Activated CD4-positive, alpha-beta T cell treated with anti-CD3 and anti-CD28 coated beads, Interleukin-2, amount 10 ng/mL, durations not matched to agents 24 days and 14 days (primary cell): ENCODE measurements at regions of chr1 and their contacts with region 1.

Region 1: GRCh38 chr1:206803221-206803730 is 31.0 kb upstream of the IL10 start:
- DNase-seq: peak; percentile 94
- H3K4me3 Mint-ChIP-seq: peak overlapping the region; percentile 55
- H3K27ac Mint-ChIP-seq: peak overlapping the region; percentile 87
- H3K4me1 Mint-ChIP-seq: peaks cover 77% of the 10 kb centered on the region
- H3K27me3 Mint-ChIP-seq: peaks cover 29% of the 10 kb centered on the region

Region 2: GRCh38 chr1:206705191-206705590 is 98.1 kb before region 1 on chr1:
- intact Hi-C with region 1: no loop called
- DNase-seq: no peak
- H3K4me3 Mint-ChIP-seq: peak overlapping the region; percentile 71
- H3K27ac Mint-ChIP-seq: peak overlapping the region; percentile 78
- H3K4me1 Mint-ChIP-seq: peaks cover 89% of the 10 kb centered on the region
- H3K27me3 Mint-ChIP-seq: no peaks in the 10 kb centered on the region

Region 3: DNA sequence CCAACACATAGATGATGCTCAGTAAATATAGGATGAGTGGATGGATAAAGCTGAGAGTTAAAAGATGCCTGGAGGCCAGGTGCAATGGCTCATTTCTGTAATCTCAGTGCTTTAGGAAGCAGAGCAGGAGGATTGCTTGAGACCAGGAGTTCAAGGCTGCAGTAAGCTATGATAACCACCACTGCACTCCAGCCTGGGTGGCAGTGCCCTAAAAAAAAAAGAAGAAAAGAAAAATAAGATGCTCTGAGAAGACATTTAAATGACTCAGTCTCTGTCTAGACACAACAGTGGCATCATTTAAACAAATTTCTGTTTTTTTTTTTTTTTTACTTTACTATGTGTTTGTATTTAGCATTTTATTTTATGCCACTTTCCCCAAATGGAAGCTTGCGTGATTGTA is 58.0 kb before region 1 on chr1:
- intact Hi-C with region 1: no loop called
- DNase-seq: no peak
- H3K4me3 Mint-ChIP-seq: no peak overlapping the region
- H3K27ac Mint-ChIP-seq: no peak overlapping the region
- H3K4me1 Mint-ChIP-seq: peaks cover 39% of the 10 kb centered on the region
- H3K27me3 Mint-ChIP-seq: peaks cover 23% of the 10 kb centered on the region

Region 4: DNA sequence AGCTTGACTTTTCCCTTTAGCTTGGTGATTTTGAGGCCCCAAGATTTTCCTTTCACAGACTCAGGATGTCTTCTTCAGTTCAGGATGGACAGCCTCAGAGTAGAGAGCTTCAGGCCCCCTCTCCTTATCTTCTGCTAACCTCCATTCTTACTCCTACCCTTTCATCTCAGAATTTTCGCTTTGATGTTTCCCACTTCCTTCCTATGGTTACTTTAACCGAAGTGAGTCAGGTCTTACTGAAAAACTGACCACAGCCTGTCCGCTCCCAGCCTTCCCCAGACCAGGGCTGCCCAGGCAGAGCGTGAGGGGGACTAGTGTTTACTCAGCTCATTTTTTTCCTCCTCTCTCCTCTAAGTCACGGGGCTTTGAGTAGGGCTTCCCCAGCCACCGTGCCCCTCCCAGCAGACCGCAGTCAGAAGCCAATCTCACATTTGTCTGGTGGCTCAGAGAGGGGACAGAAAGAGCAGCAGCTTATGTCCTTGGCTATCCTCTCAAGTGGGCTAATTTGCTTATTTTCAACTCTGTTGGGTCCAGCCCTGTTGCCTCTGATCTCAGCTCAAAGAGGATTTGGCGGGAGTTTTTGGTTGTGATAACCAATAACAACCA is 36.9 kb before region 1 on chr1:
- intact Hi-C with region 1: loop called (anchors 1 kb)
- DNase-seq: peak; percentile 91
- H3K4me3 Mint-ChIP-seq: peak overlapping the region; percentile 74
- H3K27ac Mint-ChIP-seq: peak overlapping the region; percentile 80
- H3K4me1 Mint-ChIP-seq: peaks cover 56% of the 10 kb centered on the region
- H3K27me3 Mint-ChIP-seq: peaks cover 27% of the 10 kb centered on the region

Region 5: GRCh38 chr1:206784471-206784903 is 18.8 kb before region 1 on chr1:
- intact Hi-C with region 1: loop called (anchors 1 kb)
- DNase-seq: peak; percentile 96
- H3K4me3 Mint-ChIP-seq: peak overlapping the region; percentile 52
- H3K27ac Mint-ChIP-seq: peak overlapping the region; percentile 73
- H3K4me1 Mint-ChIP-seq: peaks cover 57% of the 10 kb centered on the region
- H3K27me3 Mint-ChIP-seq: peaks cover 26% of the 10 kb centered on the region